CD4-positive, alpha-beta memory T cell (primary cell): ENCODE measurements at regions of chr3 and their contacts with region 1.

Region 1: GRCh38 chr3:111071257-111072015 is at the start of gene NECTIN3:
- DNase-seq: peak; percentile 84 to 92 (median 87)
- H3K4me3 ChIP-seq: peak within 1 kb of the TSS; percentile 78 to 82
- H3K4me3 Mint-ChIP-seq: peak within 1 kb of the TSS; percentile 93 to 97 (median 96)
- H3K27ac ChIP-seq: peak within 1 kb of the TSS; percentile 57
- H3K27ac Mint-ChIP-seq: peak within 1 kb of the TSS; percentile 90 to 95 (median 93)
- H3K4me1 ChIP-seq: peaks cover 32% of the 10 kb centered on the region
- H3K4me1 Mint-ChIP-seq: peaks cover 33 to 54% (median 44%) of the 10 kb centered on the region in 4 donors
- H3K27me3 ChIP-seq: no peaks in the 10 kb centered on the region
- H3K27me3 Mint-ChIP-seq: peaks cover 0 to 4% of the 10 kb centered on the region in 2 donors
- total RNA-seq, gene NECTIN3: 12.2 to 15.6 TPM

Region 2: DNA sequence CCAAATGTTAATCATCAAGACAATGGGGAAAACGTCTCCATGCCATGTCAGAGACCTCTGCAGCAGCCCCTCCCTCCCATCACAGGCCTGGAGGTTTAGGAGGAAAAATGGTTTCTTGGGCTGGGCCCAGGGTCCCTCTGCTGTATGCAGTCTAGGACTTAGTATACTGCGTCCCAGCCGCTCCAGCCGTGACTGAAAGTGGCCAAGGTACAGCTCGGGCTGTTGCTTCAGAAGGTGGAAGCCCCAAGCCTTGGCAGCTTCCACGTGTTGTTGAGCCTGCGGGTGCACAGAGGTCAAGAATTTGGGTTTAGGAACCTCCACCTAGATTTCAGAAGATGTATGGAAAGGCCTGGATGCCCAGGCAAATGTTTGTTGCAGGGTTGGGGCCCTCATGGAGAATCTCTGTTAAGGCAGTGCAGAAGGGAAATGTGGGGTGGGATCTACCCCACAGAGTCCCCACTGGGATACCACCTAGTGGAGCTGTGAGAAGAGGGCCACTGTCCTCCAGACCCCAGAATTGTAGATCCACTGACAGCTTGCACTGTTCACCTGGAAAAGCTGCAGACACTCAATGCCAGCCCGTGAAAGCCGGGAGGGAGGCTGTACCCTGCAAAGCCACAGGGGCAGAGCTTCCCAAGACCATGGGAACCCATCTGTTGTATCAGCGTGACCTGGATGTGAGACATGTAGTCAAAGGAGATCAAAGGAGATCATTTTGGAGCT is 25.2 kb after region 1 on chr3:
- CTCF ChIA-PET with region 1: no interaction called
- POLR2A ChIA-PET with region 1: no interaction called
- intact Hi-C with region 1: no loop called
- DNase-seq: no peak
- H3K4me3 ChIP-seq: no peak overlapping the region
- H3K4me3 Mint-ChIP-seq: no peak overlapping the region
- H3K27ac ChIP-seq: no peak overlapping the region
- H3K27ac Mint-ChIP-seq: no peak overlapping the region
- H3K4me1 ChIP-seq: no peaks in the 10 kb centered on the region
- H3K4me1 Mint-ChIP-seq: peaks cover 0 to 27% (median 16%) of the 10 kb centered on the region in 4 donors
- H3K27me3 ChIP-seq: no peaks in the 10 kb centered on the region
- H3K27me3 Mint-ChIP-seq: peaks cover 0 to 2% of the 10 kb centered on the region in 2 donors

Region 3: DNA sequence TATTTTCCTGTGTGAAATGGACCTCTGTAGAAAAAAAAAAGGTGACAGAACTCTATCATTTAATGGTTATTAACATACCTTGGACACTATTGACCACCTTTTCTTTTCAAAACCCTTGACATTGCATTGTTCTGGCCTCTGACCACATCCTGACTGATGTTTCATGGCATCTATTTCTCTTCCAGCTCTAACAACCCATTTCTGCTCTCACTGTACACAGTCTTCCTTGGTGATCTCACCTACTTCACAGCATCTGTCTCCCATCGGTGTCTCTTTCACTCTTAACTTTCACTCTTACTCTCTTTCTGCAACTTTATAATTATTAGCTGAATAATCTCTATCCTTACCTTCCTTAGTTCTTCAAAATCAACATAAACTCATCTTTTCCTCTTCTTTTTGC is 253.2 kb after region 1 on chr3:
- CTCF ChIA-PET with region 1: no interaction called
- POLR2A ChIA-PET with region 1: no interaction called
- intact Hi-C with region 1: loop called (anchors 5 kb)
- DNase-seq: no peak
- H3K4me3 ChIP-seq: peak overlapping the region in 1 of 2 donors; percentile 14
- H3K4me3 Mint-ChIP-seq: peak overlapping the region; percentile 57 to 88 (median 80)
- H3K27ac ChIP-seq: peak overlapping the region; percentile 18
- H3K27ac Mint-ChIP-seq: peak overlapping the region; percentile 33 to 94 (median 85)
- H3K4me1 ChIP-seq: peaks cover 23% of the 10 kb centered on the region
- H3K4me1 Mint-ChIP-seq: peaks cover 26 to 41% (median 33%) of the 10 kb centered on the region in 4 donors
- H3K27me3 ChIP-seq: no peaks in the 10 kb centered on the region
- H3K27me3 Mint-ChIP-seq: no peaks in the 10 kb centered on the region

Region 4: GRCh38 chr3:111392901-111393351 is 321.5 kb after region 1 on chr3:
- CTCF ChIA-PET with region 1: no interaction called
- POLR2A ChIA-PET with region 1: no interaction called
- intact Hi-C with region 1: loop called (anchors 5 kb)
- DNase-seq: peak; percentile 59 to 81 (median 65)
- H3K4me3 ChIP-seq: no peak overlapping the region
- H3K4me3 Mint-ChIP-seq: peak overlapping the region in 1 of 8 donors; percentile 24
- H3K27ac ChIP-seq: no peak overlapping the region
- H3K27ac Mint-ChIP-seq: peak overlapping the region; percentile 50 to 92 (median 72)
- H3K4me1 ChIP-seq: peaks cover 14% of the 10 kb centered on the region
- H3K4me1 Mint-ChIP-seq: peaks cover 14 to 25% (median 21%) of the 10 kb centered on the region in 4 donors
- H3K27me3 ChIP-seq: no peaks in the 10 kb centered on the region
- H3K27me3 Mint-ChIP-seq: no peaks in the 10 kb centered on the region

Region 5: GRCh38 chr3:111610189-111610588 is 538.8 kb after region 1 on chr3:
- CTCF ChIA-PET with region 1: no interaction called
- POLR2A ChIA-PET with region 1: no interaction called
- intact Hi-C with region 1: loop called (anchors 1 kb)
- DNase-seq: peak; percentile 82 to 90 (median 85)
- H3K4me3 ChIP-seq: peak overlapping the region in 1 of 2 donors; percentile 20
- H3K4me3 Mint-ChIP-seq: peak overlapping the region; percentile 4 to 87 (median 78)
- H3K27ac ChIP-seq: peak overlapping the region; percentile 65
- H3K27ac Mint-ChIP-seq: peak overlapping the region; percentile 91 to 99 (median 95)
- H3K4me1 ChIP-seq: peaks cover 55% of the 10 kb centered on the region
- H3K4me1 Mint-ChIP-seq: peaks cover 56 to 82% (median 67%) of the 10 kb centered on the region in 4 donors
- H3K27me3 ChIP-seq: no peaks in the 10 kb centered on the region
- H3K27me3 Mint-ChIP-seq: no peaks in the 10 kb centered on the region

Region 6: GRCh38 chr3:111859974-111860859 is 788.8 kb after region 1 on chr3:
- CTCF ChIA-PET with region 1: no interaction called
- POLR2A ChIA-PET with region 1: no interaction called
- intact Hi-C with region 1: loop called (anchors 2 kb)
- DNase-seq: peak; percentile 62 to 78 (median 71)
- H3K4me3 ChIP-seq: peak overlapping the region; percentile 59 to 84
- H3K4me3 Mint-ChIP-seq: peak overlapping the region; percentile 91 to 98 (median 97)
- H3K27ac ChIP-seq: peak overlapping the region; percentile 63
- H3K27ac Mint-ChIP-seq: peak overlapping the region; percentile 89 to 97 (median 95)
- H3K4me1 ChIP-seq: peaks cover 11% of the 10 kb centered on the region
- H3K4me1 Mint-ChIP-seq: peaks cover 15 to 47% (median 26%) of the 10 kb centered on the region in 4 donors
- H3K27me3 ChIP-seq: no peaks in the 10 kb centered on the region
- H3K27me3 Mint-ChIP-seq: peaks cover 0 to 1% of the 10 kb centered on the region in 2 donors